ENCODE measurements at regions of chr1 and their contacts with region 1.

Region 1: GRCh38 chr1:35715568-35716002 is 3.1 kb downstream of the C1orf216 start:
- H3K4me3 ChIP-seq: no peak overlapping the region
- H3K27ac ChIP-seq: no peak overlapping the region
- H3K4me1 ChIP-seq: no peaks in the 10 kb centered on the region
- CTCF ChIP-seq: peak; percentile 92

Region 2: DNA sequence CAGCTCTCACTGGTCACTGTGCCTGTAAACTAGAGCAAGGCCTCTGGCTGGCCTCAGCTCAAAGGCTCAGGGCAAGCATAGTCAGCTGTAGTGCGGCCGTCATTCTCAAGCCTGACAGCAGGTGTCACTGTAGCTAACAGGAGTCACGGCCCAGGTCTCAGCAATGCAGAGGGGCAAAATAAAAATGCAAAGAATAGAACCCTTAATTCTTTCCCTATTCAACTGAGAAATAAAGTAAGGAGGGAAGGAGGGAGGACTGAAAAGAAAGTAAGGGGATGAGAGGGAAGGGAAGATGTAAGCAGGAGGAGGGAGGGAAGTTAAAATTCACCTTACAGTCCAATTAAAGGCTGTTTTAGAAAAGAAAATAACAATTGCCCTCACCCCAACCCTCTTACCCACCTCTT is 264.5 kb before region 1 on chr1:
- CTCF ChIA-PET with region 1: interaction called, 17 read pairs
- POLR2A ChIA-PET with region 1: no interaction called
- H3K4me3 ChIP-seq: no peak overlapping the region
- H3K27ac ChIP-seq: no peak overlapping the region
- H3K4me1 ChIP-seq: no peaks in the 10 kb centered on the region
- CTCF ChIP-seq: no peak

Region 3: DNA sequence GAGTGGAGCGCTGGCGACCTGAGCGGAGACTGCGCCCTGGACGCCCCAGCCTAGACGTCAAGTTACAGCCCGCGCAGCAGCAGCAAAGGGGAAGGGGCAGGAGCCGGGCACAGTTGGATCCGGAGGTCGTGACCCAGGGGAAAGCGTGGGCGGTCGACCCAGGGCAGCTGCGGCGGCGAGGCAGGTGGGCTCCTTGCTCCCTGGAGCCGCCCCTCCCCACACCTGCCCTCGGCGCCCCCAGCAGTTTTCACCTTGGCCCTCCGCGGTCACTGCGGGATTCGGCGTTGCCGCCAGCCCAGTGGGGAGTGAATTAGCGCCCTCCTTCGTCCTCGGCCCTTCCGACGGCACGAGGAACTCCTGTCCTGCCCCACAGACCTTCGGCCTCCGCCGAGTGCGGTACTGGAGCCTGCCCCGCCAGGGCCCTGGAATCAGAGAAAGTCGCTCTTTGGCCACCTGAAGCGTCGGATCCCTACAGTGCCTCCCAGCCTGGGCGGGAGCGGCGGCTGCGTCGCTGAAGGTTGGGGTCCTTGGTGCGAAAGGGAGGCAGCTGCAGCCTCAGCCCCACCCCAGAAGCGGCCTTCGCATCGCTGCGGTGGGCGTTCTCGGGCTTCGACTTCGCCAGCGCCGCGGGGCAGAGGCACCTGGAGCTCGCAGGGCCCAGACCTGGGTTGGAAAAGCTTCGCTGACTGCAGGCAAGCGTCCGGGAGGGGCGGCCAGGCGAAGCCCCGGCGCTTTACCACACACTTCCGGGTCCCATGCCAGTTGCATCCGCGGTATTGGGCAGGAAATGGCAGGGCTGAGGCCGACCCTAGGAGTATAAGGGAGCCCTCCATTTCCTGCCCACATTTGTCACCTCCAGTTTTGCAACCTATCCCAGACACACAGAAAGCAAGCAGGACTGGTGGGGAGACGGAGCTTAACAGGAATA is 138.2 kb before region 1 on chr1:
- CTCF ChIA-PET with region 1: interaction called, 36 read pairs
- POLR2A ChIA-PET with region 1: interaction called, 6 read pairs
- H3K4me3 ChIP-seq: no peak overlapping the region
- H3K27ac ChIP-seq: no peak overlapping the region
- H3K4me1 ChIP-seq: no peaks in the 10 kb centered on the region
- CTCF ChIP-seq: no peak

Region 4: DNA sequence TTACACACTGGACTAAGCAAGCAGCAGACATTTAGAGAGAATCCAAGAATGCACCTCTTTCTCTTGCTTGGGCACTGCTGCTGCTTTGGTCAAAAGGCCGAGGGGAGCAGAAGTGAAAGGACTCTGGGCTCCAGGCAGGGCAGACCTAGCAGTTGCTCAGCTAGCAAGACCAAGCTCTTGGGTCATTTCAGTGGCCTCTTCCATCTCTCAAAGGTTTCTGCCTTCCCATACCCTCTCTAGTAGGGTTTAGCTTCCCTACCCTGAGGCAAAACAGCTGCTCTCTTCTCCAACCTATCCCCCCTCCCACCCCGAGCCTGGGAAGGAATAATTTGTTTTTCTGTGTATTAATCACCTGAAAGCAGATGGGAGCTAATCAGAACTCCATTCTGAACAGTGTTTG is 116.7 kb before region 1 on chr1:
- CTCF ChIA-PET with region 1: interaction called, 14 read pairs
- POLR2A ChIA-PET with region 1: interaction called, 10 read pairs
- H3K4me3 ChIP-seq: no peak overlapping the region
- H3K27ac ChIP-seq: no peak overlapping the region
- H3K4me1 ChIP-seq: no peaks in the 10 kb centered on the region
- CTCF ChIP-seq: no peak

Region 5: DNA sequence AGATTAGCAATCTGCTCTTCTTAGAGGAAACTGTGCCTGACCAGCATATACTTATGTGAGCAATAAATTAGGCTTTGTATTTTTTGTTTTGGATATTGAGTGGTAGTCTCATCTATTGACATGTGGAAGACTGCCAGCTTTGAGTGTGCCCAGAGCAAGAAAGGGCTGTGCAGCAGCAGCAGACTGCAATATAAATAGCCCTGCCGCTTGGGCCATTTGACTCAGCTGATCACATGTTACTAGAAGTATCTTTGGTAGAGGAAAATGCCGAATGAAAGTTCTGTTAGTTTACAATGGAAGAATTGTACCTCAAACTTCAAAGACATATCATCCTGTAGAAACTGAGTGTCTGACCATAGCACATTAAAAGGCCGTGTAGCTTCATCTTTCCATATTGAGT is 65.2 kb before region 1 on chr1:
- CTCF ChIA-PET with region 1: interaction called, 10 read pairs
- POLR2A ChIA-PET with region 1: no interaction called
- H3K4me3 ChIP-seq: no peak overlapping the region
- H3K27ac ChIP-seq: no peak overlapping the region
- H3K4me1 ChIP-seq: no peaks in the 10 kb centered on the region
- CTCF ChIP-seq: no peak

Region 6: DNA sequence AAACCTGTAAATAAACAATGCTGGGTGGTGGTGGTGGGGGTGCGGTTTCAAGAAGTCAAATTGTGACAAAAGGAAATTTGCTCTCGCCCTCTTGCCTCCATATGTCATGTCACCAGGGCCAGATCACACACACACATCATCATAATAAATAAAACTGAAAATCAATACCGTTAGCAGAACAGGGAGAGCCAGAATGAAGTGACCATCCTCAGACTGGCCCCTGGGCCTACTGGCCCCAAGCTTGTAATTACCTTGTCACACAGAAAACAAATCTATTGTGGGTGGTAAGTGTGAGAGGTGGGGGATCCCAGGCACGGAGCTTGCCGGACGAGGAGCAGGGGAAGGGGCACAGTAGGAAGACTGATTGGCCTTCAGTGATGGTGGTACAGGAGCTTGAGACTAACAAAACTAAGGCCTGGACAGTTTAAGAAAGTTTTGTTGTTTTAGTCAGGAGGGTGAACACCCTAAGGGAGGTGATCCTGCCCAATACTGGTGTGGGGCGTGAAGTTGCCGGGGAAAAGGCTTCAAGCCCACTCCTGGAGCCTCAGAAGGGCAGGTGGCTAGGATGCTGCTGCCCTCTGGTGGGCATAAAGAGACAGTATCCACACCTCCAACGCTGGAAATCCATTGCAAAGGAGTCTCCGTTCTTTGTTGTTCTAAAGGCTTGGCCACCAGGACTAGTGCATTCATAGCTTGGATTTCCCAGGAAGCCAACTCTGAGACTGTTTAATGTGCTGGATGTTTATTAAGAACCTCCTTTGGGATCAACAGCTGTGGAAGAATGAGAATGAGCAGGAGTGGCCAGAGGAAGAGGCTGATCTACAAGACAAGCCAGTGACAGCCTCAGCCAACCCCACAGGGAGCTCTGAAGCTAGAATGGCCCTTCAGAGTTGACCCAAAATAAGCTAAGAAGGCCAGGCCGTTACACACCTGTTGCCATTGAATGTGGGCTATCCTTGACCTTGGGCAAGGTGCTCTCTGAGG is 11.2 kb after region 1 on chr1:
- CTCF ChIA-PET with region 1: interaction called, 88 read pairs
- POLR2A ChIA-PET with region 1: interaction called, 4 read pairs
- H3K4me3 ChIP-seq: no peak overlapping the region
- H3K27ac ChIP-seq: 0 out of 2 replicates have a peak overlapping the region, but pooled peaks have one; percentile 11
- H3K4me1 ChIP-seq: no peaks in the 10 kb centered on the region
- CTCF ChIP-seq: peak; percentile 77

Region 7: GRCh38 chr1:35988237-35988636 is 272.7 kb after region 1 on chr1:
- CTCF ChIA-PET with region 1: no interaction called
- POLR2A ChIA-PET with region 1: no interaction called
- H3K4me3 ChIP-seq: no peak overlapping the region
- H3K27ac ChIP-seq: no peak overlapping the region
- H3K4me1 ChIP-seq: no peaks in the 10 kb centered on the region
- CTCF ChIP-seq: no peak